MCF 10A (cell line): ENCODE measurements at regions of chr17 and their contacts with region 1.

Region 1: GRCh38 chr17:82236142-82236981 is 7.5 kb downstream of the SLC16A3 start:
- DNase-seq: peak; percentile 74
- H3K4me3 Mint-ChIP-seq: peak overlapping the region; percentile 16
- H3K27ac Mint-ChIP-seq: peak overlapping the region; percentile 39
- H3K4me1 Mint-ChIP-seq: peaks cover 22% of the 10 kb centered on the region
- H3K27me3 Mint-ChIP-seq: no peaks in the 10 kb centered on the region
- CTCF ChIP-seq: peak; percentile 94

Region 2: DNA sequence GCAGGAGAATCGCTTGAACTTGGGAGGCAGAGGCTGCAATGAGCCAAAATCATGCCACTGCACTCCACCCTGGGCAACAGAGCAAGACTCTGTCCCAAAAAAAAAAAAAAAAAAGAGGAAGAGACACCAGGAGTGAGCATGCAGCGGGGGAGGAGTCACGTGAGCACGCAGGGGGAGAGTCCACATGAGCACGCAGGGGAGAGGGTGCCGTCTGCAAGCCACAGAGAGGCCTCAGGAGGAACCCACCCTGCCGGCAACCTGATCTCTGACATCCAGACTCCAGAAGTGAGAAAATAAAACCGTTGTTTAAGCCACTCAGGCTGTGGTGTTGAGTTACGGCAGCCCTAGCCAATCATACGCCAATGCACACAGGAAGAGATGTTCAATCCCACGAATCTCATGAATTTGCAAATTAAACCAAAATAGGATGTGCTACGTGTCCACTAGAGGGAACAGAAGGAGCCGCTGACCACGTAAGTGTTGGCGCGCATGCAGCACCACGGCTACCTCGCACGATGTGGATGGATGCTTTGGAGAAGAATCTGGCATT is 65.9 kb before region 1 on chr17:
- CTCF ChIA-PET with region 1: no interaction called
- POLR2A ChIA-PET with region 1: no interaction called
- intact Hi-C with region 1: no loop called
- DNase-seq: no peak
- H3K4me3 Mint-ChIP-seq: no peak overlapping the region
- H3K27ac Mint-ChIP-seq: no peak overlapping the region
- H3K4me1 Mint-ChIP-seq: no peaks in the 10 kb centered on the region
- H3K27me3 Mint-ChIP-seq: no peaks in the 10 kb centered on the region
- CTCF ChIP-seq: no peak

Region 3: DNA sequence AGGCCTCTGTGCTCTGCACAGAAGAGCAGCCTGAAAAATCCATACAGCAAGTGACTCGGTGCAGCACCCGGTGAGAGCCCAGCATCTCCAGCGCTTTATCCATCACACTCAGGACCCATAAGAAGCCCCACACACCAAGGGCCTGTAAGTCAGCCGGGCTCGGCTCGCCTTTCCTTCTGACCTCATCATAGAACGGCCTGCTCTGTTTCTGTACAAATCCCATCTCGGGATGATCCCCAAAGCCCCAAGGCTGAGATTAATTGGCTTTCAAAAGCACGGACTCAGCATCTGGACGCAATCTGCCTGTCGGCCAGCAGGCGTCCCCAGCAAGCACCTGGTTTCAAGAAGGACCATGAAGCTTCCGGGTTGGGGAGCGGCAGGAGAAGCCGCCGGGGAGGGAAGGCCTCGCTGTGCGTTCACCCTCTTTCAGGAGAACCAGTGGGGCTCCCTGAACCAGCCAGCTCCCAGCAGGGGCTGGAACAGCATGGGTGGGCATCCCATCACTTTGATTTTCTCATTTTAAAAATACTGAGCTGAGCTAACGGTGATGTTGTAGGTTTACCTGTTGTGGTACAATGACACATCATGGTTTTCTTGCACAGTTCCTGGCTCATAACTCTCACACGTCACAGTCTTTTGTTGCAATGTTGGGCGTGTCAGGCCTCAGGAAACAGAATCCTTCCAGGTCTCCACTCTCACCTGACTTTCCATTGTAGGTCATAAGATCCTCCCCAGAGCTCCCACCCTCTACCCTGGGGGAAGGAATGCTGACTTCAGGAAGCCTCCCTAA is 30.4 kb before region 1 on chr17:
- CTCF ChIA-PET with region 1: interaction called, 15 read pairs
- POLR2A ChIA-PET with region 1: interaction called, 54 read pairs
- intact Hi-C with region 1: loop called (anchors 5 kb)
- DNase-seq: peak; percentile 96
- H3K4me3 Mint-ChIP-seq: peak overlapping the region; percentile 64
- H3K27ac Mint-ChIP-seq: peak overlapping the region; percentile 97
- H3K4me1 Mint-ChIP-seq: peaks cover 27% of the 10 kb centered on the region
- H3K27me3 Mint-ChIP-seq: no peaks in the 10 kb centered on the region
- CTCF ChIP-seq: peak; percentile 80

Region 4: DNA sequence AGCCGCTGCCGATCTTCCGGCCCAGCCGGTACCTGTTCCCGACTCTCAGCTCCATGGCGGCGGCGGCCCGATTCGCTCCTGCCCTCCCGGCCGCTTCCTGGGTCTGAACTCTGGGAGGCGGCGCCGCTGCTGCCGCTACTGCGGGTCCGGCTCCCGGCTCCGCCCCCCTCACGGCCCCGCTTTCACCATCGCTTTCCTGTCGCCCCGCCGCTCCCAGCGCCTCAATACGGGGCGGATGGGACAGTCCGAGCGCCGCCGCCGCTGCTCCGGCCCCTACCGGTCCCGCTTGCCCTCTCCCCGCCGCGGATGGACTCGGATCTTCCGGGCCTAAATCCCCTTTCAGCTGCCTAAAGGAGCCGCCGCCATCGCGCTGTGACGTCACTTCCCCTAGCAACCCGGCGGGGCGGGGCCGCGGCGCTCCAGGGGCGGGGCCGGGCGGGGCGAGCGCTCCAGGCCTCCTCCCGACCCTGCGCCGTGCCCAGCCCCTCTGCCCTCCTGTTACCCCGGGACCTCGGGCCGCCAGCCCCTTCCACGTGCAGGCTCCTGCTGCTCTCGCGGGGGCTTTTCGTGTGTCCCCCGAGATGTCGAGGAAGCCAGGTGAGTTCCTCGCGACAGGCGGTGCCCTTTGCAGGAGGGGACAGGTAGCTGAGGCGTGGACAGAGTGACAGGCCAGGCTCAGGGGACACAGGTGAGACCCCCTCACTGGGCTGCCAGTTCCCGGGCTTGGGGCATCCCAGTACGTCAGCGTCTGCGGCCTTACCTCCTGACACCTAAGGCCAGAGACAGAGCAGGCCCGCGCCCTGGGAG is 37.2 kb after region 1 on chr17 and contains the start of gene CSNK1D:
- CTCF ChIA-PET with region 1: interaction called, 3 read pairs
- POLR2A ChIA-PET with region 1: interaction called, 10 read pairs
- intact Hi-C with region 1: no loop called
- DNase-seq: peak; percentile 88
- H3K4me3 Mint-ChIP-seq: peak within 1 kb of the TSS; percentile 77
- H3K27ac Mint-ChIP-seq: peak within 1 kb of the TSS; percentile 100
- H3K4me1 Mint-ChIP-seq: peaks cover 16% of the 10 kb centered on the region
- H3K27me3 Mint-ChIP-seq: no peaks in the 10 kb centered on the region
- CTCF ChIP-seq: no peak
- total RNA-seq, gene CSNK1D: 191 and 193 TPM in 2 replicates

Region 5: GRCh38 chr17:82320956-82321927 is 84.9 kb after region 1 on chr17:
- CTCF ChIA-PET with region 1: no interaction called
- POLR2A ChIA-PET with region 1: interaction called, 7 read pairs
- intact Hi-C with region 1: loop called (anchors 5 kb)
- DNase-seq: peak; percentile 24
- H3K4me3 Mint-ChIP-seq: no peak overlapping the region
- H3K27ac Mint-ChIP-seq: no peak overlapping the region
- H3K4me1 Mint-ChIP-seq: no peaks in the 10 kb centered on the region
- H3K27me3 Mint-ChIP-seq: no peaks in the 10 kb centered on the region
- CTCF ChIP-seq: peak; percentile 89